Thyroid gland (tissue), 4 donors: ENCODE measurements at regions of chr3 and their contacts with region 1.

Region 1: GRCh38 chr3:179322286-179323196 is at the start of gene ZNF639:
- DNase-seq: peak; percentile 85 to 87
- H3K4me3 ChIP-seq: peak within 1 kb of the TSS; percentile 55 to 85 (median 83)
- H3K27ac ChIP-seq: peak within 1 kb of the TSS; percentile 97 to 99 (median 98)
- H3K4me1 ChIP-seq: peaks cover 9 to 12% of the 10 kb centered on the region in 2 donors
- H3K27me3 ChIP-seq: no peaks in the 10 kb centered on the region
- CTCF ChIP-seq: peak; percentile 41 to 88 (median 86)
- POLR2A ChIP-seq: peak; percentile 68 to 85
- total RNA-seq, gene ZNF639: 59.0 to 97.4 (median 76.4) TPM

Region 2: GRCh38 chr3:179015551-179016020 is 307.0 kb before region 1 on chr3:
- intact Hi-C with region 1: loop called (anchors 5 kb)
- DNase-seq: peak; percentile 22 to 28
- H3K4me3 ChIP-seq: no peak overlapping the region
- H3K27ac ChIP-seq: no peak overlapping the region
- H3K4me1 ChIP-seq: peaks cover 0 to 5% of the 10 kb centered on the region in 2 donors
- H3K27me3 ChIP-seq: no peaks in the 10 kb centered on the region
- CTCF ChIP-seq: peak; percentile 54 to 90 (median 76)
- POLR2A ChIP-seq: no peak

Region 3: GRCh38 chr3:179147873-179148615 is 174.5 kb before region 1 on chr3 and contains the start of gene PIK3CA:
- intact Hi-C with region 1: loop called (anchors 5 kb)
- DNase-seq: peak; percentile 95 to 97
- H3K4me3 ChIP-seq: peak within 1 kb of the TSS; percentile 12 to 95 (median 94)
- H3K27ac ChIP-seq: peak within 1 kb of the TSS; percentile 94 to 96 (median 95)
- H3K4me1 ChIP-seq: peaks cover 0 to 8% of the 10 kb centered on the region in 2 donors
- H3K27me3 ChIP-seq: no peaks in the 10 kb centered on the region
- CTCF ChIP-seq: peak in 1 of 6 experiments; percentile 2
- POLR2A ChIP-seq: peak; percentile 55 to 91
- total RNA-seq, gene PIK3CA: 19.0 to 39.8 (median 22.4) TPM